ENCODE measurements at regions of chrX and their contacts with region 1.

Region 1: DNA sequence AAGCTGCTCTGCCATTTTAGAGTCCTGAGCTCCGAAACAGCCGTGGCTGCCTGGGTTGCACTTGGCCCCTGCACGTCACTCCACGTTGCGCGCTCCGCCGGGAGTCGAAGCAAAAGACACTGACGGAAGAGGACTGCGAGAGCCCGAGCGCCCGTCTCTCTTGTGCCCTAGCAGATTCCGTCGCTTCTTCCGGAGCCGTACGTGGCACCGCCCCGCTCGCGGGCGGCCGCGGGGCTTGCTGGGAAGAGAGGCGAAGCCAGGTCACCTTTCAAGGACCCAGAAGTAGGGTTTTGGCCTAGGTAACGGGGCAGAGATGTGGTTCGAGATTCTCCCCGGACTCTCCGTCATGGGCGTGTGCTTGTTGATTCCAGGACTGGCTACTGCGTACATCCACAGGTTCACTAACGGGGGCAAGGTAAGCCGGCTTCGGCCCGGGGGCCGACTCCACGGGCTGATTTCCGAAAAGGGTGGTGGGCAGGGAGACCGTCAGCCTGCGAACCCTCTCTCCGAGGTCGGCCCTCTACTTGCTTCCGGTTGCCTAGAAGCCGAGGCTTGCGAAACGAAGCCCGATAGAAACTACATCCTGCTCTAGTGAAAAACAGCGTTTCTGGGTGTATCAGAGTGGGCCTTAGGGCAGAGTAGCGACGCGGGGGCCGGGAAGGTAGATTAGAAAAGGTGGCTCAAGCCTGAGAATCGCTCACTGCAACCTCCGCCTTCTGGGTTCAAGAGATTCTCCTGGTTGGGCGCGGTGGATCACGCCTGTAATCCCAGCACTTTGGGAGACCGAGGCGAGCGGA is at the starts of genes NDUFA1 and RNF113A:
- DNase-seq: peak; percentile 91
- ATAC-seq: peak; percentile 94
- H3K4me3 ChIP-seq: peak within 1 kb of the TSS; percentile 99
- H3K27ac ChIP-seq: peak within 1 kb of the TSS; percentile 84
- H3K4me1 ChIP-seq: peaks cover 5% of the 10 kb centered on the region
- H3K27me3 ChIP-seq: no peaks in the 10 kb centered on the region
- CTCF ChIP-seq: no peak
- total RNA-seq, gene NDUFA1: 122 and 167 TPM in 2 replicates
- total RNA-seq, gene RNF113A: 13.8 and 18.6 TPM in 2 replicates

Region 2: GRCh38 chrX:119791438-119792231 is 80.2 kb before region 1 on chrX and contains the start of gene RPL39:
- CTCF ChIA-PET with region 1: no interaction called
- POLR2A ChIA-PET with region 1: interaction called, 4 read pairs
- intact Hi-C with region 1: loop called (anchors 5 kb)
- DNase-seq: peak; percentile 87
- ATAC-seq: peak; percentile 95
- H3K4me3 ChIP-seq: peak within 1 kb of the TSS; percentile 99
- H3K27ac ChIP-seq: peak within 1 kb of the TSS; percentile 85
- H3K4me1 ChIP-seq: peaks cover 23% of the 10 kb centered on the region; the same call in 1 of the 2 replicates
- H3K27me3 ChIP-seq: no peaks in the 10 kb centered on the region
- CTCF ChIP-seq: no peak
- total RNA-seq, gene RPL39: 869 and 1,578 TPM in 2 replicates

Region 3: GRCh38 chrX:119852382-119853353 is 19.1 kb before region 1 on chrX and contains the start of gene UPF3B:
- CTCF ChIA-PET with region 1: no interaction called
- POLR2A ChIA-PET with region 1: interaction called, 12 read pairs
- intact Hi-C with region 1: loop called (anchors 1 kb)
- DNase-seq: peak; percentile 98
- ATAC-seq: peak; percentile 94
- H3K4me3 ChIP-seq: peak within 1 kb of the TSS; percentile 100
- H3K27ac ChIP-seq: peak within 1 kb of the TSS; percentile 55
- H3K4me1 ChIP-seq: peaks cover 6% of the 10 kb centered on the region; the same call in 1 of the 2 replicates
- H3K27me3 ChIP-seq: no peaks in the 10 kb centered on the region
- CTCF ChIP-seq: no peak
- total RNA-seq, gene UPF3B: 4.7 and 8.1 TPM in 2 replicates

Measured in PC-3 (cell line).